CD4-positive, alpha-beta T cell (primary cell): ENCODE measurements at regions of chr11 and their contacts with region 1.

Region 1: DNA sequence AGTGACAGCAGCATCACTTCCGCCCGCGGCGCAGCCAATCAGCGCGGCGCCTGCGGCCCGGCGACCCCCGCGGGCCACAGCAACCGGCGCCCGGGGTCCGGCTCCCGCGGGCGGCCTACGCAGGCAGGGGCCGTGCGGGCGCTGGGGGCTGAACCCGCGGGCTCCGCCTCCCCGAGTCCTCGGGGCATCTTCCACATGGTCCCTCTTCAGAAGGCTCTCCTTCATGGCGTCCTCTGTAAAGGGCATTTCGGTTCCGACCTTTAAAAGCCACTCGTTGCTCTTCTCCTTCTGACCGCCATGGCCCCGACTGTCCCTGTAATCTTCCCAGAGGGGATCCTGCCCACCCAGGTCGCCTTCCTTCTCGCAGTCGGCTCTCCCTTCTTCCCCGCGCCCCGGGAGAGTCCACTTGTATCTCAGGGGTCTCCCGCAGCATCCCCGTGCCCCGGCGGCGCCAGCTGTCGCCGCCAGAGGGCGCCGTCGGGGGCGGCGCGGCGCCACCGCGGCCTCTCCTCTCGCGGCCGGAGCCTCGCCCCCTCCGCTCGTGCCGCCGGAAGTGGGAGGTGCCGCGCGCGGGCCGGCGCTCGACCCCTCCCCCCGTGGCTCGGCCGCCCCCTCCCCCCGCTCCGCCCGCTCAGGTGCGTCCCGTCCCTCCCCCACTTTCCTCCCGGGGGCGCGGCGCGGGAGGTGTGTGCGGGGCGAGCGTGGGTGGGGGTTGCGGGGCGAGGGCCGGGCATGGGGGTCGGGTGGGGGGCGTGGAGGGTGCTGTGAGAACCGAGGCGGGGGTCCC is at the start of gene RNF214:
- DNase-seq: peak; percentile 51 to 91 (median 71)
- ATAC-seq: peak; percentile 70
- H3K4me3 ChIP-seq: peak within 1 kb of the TSS; percentile 100
- H3K4me3 Mint-ChIP-seq: peak within 1 kb of the TSS; percentile 100
- H3K27ac ChIP-seq: peak within 1 kb of the TSS; percentile 91 to 97
- H3K27ac Mint-ChIP-seq: peak within 1 kb of the TSS; percentile 93
- H3K4me1 ChIP-seq: peaks cover 40% of the 10 kb centered on the region
- H3K4me1 Mint-ChIP-seq: peaks cover 58% of the 10 kb centered on the region
- H3K27me3 ChIP-seq: no peaks in the 10 kb centered on the region
- H3K27me3 Mint-ChIP-seq: no peaks in the 10 kb centered on the region
- CTCF ChIP-seq: peak; percentile 70
- total RNA-seq, gene RNF214: 12.9 to 15.8 TPM

Region 2: DNA sequence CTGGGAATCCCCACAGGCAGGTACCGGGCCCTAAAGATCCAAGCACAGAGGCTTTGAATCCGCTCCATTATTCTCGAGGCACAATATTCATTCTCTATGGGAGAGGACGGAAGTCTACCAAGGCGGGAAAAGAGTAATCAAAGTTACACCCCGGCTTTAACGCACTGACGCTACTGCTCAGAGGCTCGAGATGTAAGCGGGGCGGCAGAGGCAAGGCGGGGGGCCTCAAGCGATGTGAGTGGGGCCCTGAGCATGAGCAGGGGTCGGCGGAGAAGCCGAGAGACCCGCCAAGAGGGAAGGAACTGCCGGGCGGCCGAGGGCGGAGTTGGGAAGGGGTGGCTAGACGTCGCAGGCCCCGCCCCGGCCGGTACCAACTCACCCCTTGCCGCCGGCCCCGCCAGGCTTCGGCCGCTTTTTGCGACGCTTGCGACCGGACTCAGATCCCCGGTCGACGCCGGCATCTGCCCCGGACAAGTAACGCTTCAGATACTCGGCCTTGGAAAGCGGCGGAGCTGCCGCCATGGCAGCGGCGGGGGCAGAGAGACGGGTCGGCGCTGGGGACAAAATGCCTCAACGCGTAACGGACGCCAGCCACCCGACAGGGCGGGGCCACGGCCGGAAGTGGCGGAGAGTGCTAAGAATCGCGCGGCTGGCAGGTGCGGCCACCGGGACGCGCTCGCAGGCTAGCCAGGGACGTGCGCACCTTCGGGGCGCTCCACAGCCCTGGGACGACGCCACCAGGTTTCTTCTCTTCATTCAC is 459.7 kb before region 1 on chr11 and contains the start of gene BUD13:
- CTCF ChIA-PET with region 1: interaction called, 3 read pairs
- POLR2A ChIA-PET with region 1: no interaction called
- intact Hi-C with region 1: loop called in 1 of 2 experiments (anchors 5 kb)
- DNase-seq: peak; percentile 90 to 96 (median 94)
- ATAC-seq: peak; percentile 92
- H3K4me3 ChIP-seq: peak within 1 kb of the TSS; percentile 92
- H3K4me3 Mint-ChIP-seq: peak within 1 kb of the TSS; percentile 99
- H3K27ac ChIP-seq: peak within 1 kb of the TSS; percentile 87 to 90
- H3K27ac Mint-ChIP-seq: peak within 1 kb of the TSS; percentile 95
- H3K4me1 ChIP-seq: peaks cover 23% of the 10 kb centered on the region
- H3K4me1 Mint-ChIP-seq: peaks cover 45% of the 10 kb centered on the region
- H3K27me3 ChIP-seq: no peaks in the 10 kb centered on the region
- H3K27me3 Mint-ChIP-seq: no peaks in the 10 kb centered on the region
- CTCF ChIP-seq: peak; percentile 16
- total RNA-seq, gene BUD13: 9.2 to 10.1 TPM

Region 3: DNA sequence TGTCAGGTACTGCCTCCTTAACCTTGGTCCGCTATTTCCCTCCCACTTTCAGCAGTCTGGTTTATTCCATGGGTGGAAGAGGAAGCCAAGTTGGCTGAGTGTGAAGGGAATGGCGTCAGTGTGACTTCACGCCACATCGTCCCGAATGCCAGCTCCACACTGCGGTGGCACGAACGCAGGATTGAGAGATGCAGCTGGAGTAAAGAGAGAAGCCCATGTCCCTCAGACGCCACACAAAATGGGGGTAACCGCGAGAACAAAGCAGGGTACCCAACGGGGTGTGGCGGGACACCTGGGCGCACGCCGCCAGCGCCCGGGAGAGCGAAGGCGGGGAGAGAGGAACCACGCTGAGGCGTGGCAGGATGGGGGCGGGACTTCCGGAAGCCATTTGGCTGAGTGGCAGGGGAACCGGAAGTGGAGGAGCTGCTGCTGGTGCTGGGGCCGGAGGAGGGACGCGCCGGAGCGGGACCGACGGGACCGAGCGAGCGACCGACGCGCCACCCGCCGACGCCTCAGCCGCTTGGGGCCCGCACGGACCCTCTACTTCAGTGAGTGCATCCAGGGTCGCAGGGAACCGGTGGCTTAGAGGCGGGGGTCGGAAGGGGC is 88.3 kb before region 1 on chr11 and contains the start of gene PAFAH1B2:
- CTCF ChIA-PET with region 1: no interaction called
- POLR2A ChIA-PET with region 1: interaction called, 22 read pairs
- intact Hi-C with region 1: loop called in 1 of 2 experiments (anchors 2 kb)
- DNase-seq: peak; percentile 88 to 98 (median 94)
- ATAC-seq: peak; percentile 88
- H3K4me3 ChIP-seq: peak within 1 kb of the TSS; percentile 96
- H3K4me3 Mint-ChIP-seq: peak within 1 kb of the TSS; percentile 98
- H3K27ac ChIP-seq: peak within 1 kb of the TSS; percentile 61 to 74
- H3K27ac Mint-ChIP-seq: peak within 1 kb of the TSS; percentile 95
- H3K4me1 ChIP-seq: peaks cover 41% of the 10 kb centered on the region
- H3K4me1 Mint-ChIP-seq: peaks cover 45% of the 10 kb centered on the region
- H3K27me3 ChIP-seq: no peaks in the 10 kb centered on the region
- H3K27me3 Mint-ChIP-seq: no peaks in the 10 kb centered on the region
- CTCF ChIP-seq: no peak
- total RNA-seq, gene PAFAH1B2: 44.3 to 45.6 TPM

Region 4: GRCh38 chr11:117178210-117179034 is 53.9 kb before region 1 on chr11 and contains the start of gene SIDT2:
- CTCF ChIA-PET with region 1: interaction called, 11 read pairs
- POLR2A ChIA-PET with region 1: interaction called, 46 read pairs
- intact Hi-C with region 1: loop called in 1 of 2 experiments (anchors 2 kb)
- DNase-seq: peak; percentile 77 to 94 (median 86)
- ATAC-seq: peak; percentile 89
- H3K4me3 ChIP-seq: peak within 1 kb of the TSS; percentile 81
- H3K4me3 Mint-ChIP-seq: peak within 1 kb of the TSS; percentile 99
- H3K27ac ChIP-seq: peak within 1 kb of the TSS; percentile 34 to 52
- H3K27ac Mint-ChIP-seq: peak within 1 kb of the TSS; percentile 98
- H3K4me1 ChIP-seq: peaks cover 32% of the 10 kb centered on the region
- H3K4me1 Mint-ChIP-seq: peaks cover 40% of the 10 kb centered on the region
- H3K27me3 ChIP-seq: no peaks in the 10 kb centered on the region
- H3K27me3 Mint-ChIP-seq: no peaks in the 10 kb centered on the region
- CTCF ChIP-seq: no peak
- total RNA-seq, gene SIDT2: 197 to 200 TPM

Region 5: DNA sequence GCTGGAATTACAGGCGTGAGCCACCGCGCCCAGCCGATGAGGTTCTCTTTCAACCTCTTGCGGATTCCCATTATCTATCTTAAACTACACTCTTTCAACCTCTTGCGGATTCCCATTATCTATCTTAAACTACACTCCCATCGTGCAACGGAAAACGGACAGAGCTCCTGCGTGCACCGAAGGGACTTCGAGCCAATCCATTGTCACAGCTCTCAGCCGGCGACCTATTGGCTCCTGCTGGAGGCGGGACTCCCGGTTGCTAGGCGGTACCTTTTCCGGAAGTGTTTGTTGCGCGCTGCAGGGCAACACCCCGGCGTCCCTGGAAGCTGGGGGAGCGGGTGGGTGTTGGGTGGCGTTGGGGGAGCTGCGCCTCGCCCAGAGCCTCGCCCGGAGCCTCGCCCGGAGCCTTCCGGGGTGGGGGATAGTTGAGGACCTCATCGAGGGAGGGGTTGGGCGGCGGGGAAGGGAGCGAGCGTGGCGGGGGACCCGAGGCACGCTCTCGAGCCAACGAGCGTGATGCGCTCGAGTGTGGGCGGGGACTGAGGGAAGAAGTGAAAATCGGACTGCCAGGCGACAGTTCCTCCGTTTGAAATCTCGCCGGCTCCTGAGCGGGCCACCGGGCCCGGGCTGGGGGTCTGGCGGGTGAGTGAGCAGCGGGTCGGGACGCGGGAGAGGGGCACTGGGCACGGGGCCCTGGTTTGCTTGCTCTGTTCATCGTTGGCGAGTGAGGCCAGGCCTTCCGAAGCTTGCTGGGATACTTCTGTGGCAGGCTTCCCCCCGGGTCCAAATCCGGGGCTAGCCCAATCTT is 95.5 kb after region 1 on chr11 and contains the start of gene CEP164:
- CTCF ChIA-PET with region 1: no interaction called
- POLR2A ChIA-PET with region 1: interaction called, 21 read pairs
- intact Hi-C with region 1: loop called (anchors 2 to 5 kb)
- DNase-seq: peak; percentile 89 to 97 (median 92)
- ATAC-seq: peak; percentile 93
- H3K4me3 ChIP-seq: peak within 1 kb of the TSS; percentile 92
- H3K4me3 Mint-ChIP-seq: peak within 1 kb of the TSS; percentile 69
- H3K27ac ChIP-seq: peak within 1 kb of the TSS; percentile 68 to 92
- H3K27ac Mint-ChIP-seq: peak within 1 kb of the TSS; percentile 59
- H3K4me1 ChIP-seq: peaks cover 23% of the 10 kb centered on the region
- H3K4me1 Mint-ChIP-seq: peaks cover 9% of the 10 kb centered on the region
- H3K27me3 ChIP-seq: no peaks in the 10 kb centered on the region
- H3K27me3 Mint-ChIP-seq: no peaks in the 10 kb centered on the region
- CTCF ChIP-seq: no peak
- total RNA-seq, gene CEP164: 33.0 to 36.7 TPM

Region 6: DNA sequence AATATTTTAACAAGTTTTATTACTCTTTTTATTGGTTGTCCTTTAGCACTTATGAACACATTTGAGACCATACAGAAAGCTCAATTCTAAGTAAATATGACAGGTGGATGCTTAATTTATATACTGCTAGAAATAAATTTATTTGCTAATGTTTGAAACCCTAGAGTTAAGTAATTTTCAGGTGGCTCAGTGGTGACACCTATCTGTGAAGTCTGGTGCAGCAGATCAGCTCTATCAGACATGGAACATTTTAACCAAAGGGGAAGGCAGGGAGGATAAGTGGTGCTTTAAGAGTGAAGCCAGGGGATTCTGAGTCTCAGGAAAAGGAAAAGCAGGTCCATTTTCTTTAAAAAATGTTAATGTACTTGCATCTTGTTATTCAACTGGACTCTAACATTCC is 388.9 kb after region 1 on chr11:
- CTCF ChIA-PET with region 1: no interaction called
- POLR2A ChIA-PET with region 1: no interaction called
- intact Hi-C with region 1: no loop called
- DNase-seq: no peak
- ATAC-seq: no peak
- H3K4me3 ChIP-seq: no peak overlapping the region
- H3K4me3 Mint-ChIP-seq: no peak overlapping the region
- H3K27ac ChIP-seq: no peak overlapping the region
- H3K27ac Mint-ChIP-seq: no peak overlapping the region
- H3K4me1 ChIP-seq: no peaks in the 10 kb centered on the region
- H3K4me1 Mint-ChIP-seq: no peaks in the 10 kb centered on the region
- H3K27me3 ChIP-seq: peaks cover 0 to 2% of the 10 kb centered on the region in 2 experiments
- H3K27me3 Mint-ChIP-seq: peaks cover 13% of the 10 kb centered on the region
- CTCF ChIP-seq: peak; percentile 19

Region 7: GRCh38 chr11:118572061-118572980 is 1340.0 kb after region 1 on chr11 and contains the start of gene ARCN1:
- CTCF ChIA-PET with region 1: no interaction called
- POLR2A ChIA-PET with region 1: no interaction called
- intact Hi-C with region 1: loop called in 1 of 2 experiments (anchors 10 kb)
- DNase-seq: peak; percentile 64 to 91 (median 75)
- ATAC-seq: peak; percentile 81
- H3K4me3 ChIP-seq: peak within 1 kb of the TSS; percentile 88
- H3K4me3 Mint-ChIP-seq: peak within 1 kb of the TSS; percentile 99
- H3K27ac ChIP-seq: peak within 1 kb of the TSS; percentile 97 to 98
- H3K27ac Mint-ChIP-seq: peak within 1 kb of the TSS; percentile 94
- H3K4me1 ChIP-seq: peaks cover 20% of the 10 kb centered on the region
- H3K4me1 Mint-ChIP-seq: peaks cover 52% of the 10 kb centered on the region
- H3K27me3 ChIP-seq: no peaks in the 10 kb centered on the region
- H3K27me3 Mint-ChIP-seq: no peaks in the 10 kb centered on the region
- CTCF ChIP-seq: no peak
- total RNA-seq, gene ARCN1: 73.7 to 78.6 TPM